ENCODE measurements at regions of chr13 and their contacts with region 1.

Region 1: DNA sequence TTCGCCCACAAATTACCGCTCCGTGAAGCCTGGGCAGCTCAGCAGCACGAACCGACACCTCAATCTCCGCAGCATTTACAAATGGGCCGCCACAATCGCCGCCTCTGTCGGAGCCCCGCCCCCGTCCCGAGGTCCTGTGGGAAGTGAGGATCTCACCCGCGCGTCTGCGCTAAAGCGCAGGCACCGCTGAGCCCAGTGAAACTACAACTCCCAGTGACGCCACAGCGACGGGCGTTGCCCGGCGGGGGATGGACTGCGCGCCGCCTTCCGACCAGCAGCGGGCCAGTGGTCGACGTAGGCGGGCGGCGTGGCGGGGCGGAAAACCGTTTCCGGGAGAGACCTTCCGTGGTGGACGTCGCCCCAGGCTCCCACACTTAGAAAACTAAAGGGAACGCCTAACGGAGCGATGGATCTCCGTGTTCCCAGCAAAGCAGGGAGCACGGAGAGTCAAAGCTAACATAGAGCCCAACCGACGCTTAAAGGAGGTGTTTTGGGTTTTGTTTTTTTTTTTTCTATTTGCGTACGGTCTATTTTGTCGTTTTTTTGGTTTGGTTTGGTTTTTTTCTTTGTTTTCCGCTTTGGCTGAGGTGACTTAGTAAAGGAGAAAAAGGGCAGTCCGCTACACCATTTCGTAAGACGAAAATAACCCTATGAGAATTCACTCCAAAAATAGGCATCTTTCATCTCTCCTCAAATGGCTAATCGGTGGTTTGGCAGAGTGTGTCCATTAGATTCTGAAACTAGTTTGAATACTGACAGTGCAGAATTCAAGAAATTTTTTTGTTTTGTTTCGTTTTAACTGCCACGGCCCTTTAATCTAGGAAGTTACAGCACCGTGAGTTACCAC is 159.0 kb downstream of the RNF17 start:
- DNase-seq: peak; percentile 85 to 96 (median 94)
- ATAC-seq: peak; percentile 99
- H3K4me3 ChIP-seq: peak overlapping the region; percentile 82 to 95
- H3K4me3 Mint-ChIP-seq: peak overlapping the region; percentile 96
- H3K27ac ChIP-seq: peak overlapping the region; percentile 70 to 94
- H3K27ac Mint-ChIP-seq: peak overlapping the region; percentile 92
- H3K4me1 ChIP-seq: peaks cover 9% of the 10 kb centered on the region
- H3K4me1 Mint-ChIP-seq: peaks cover 15% of the 10 kb centered on the region
- H3K27me3 ChIP-seq: no peaks in the 10 kb centered on the region
- H3K27me3 Mint-ChIP-seq: no peaks in the 10 kb centered on the region
- CTCF ChIP-seq: no peak

Region 2: GRCh38 chr13:23888658-23889614 is 1034.0 kb before region 1 on chr13 and contains the start of gene MIPEP:
- CTCF ChIA-PET with region 1: no interaction called
- POLR2A ChIA-PET with region 1: no interaction called
- intact Hi-C with region 1: loop called in 1 of 2 experiments (anchors 5 kb)
- DNase-seq: peak; percentile 73 to 95 (median 87)
- ATAC-seq: peak; percentile 93
- H3K4me3 ChIP-seq: peak within 1 kb of the TSS; percentile 79
- H3K4me3 Mint-ChIP-seq: peak within 1 kb of the TSS; percentile 90
- H3K27ac ChIP-seq: peak within 1 kb of the TSS; percentile 61 to 71
- H3K27ac Mint-ChIP-seq: peak within 1 kb of the TSS; percentile 88
- H3K4me1 ChIP-seq: peaks cover 7% of the 10 kb centered on the region
- H3K4me1 Mint-ChIP-seq: peaks cover 23% of the 10 kb centered on the region
- H3K27me3 ChIP-seq: no peaks in the 10 kb centered on the region
- H3K27me3 Mint-ChIP-seq: peaks cover 3% of the 10 kb centered on the region
- CTCF ChIP-seq: peak; percentile 65
- total RNA-seq, gene MIPEP: 3.0 to 3.8 TPM

Region 3: GRCh38 chr13:24254146-24254841 is 668.7 kb before region 1 on chr13:
- CTCF ChIA-PET with region 1: no interaction called
- POLR2A ChIA-PET with region 1: no interaction called
- intact Hi-C with region 1: loop called in 1 of 2 experiments (anchors 5 kb)
- DNase-seq: peak in 8 of 9 experiments; percentile 44 to 91 (median 69)
- ATAC-seq: peak; percentile 58
- H3K4me3 ChIP-seq: peak overlapping the region; percentile 73 to 94
- H3K4me3 Mint-ChIP-seq: peak overlapping the region; percentile 91
- H3K27ac ChIP-seq: peak overlapping the region; percentile 77 to 84
- H3K27ac Mint-ChIP-seq: peak overlapping the region; percentile 98
- H3K4me1 ChIP-seq: peaks cover 85% of the 10 kb centered on the region
- H3K4me1 Mint-ChIP-seq: peaks cover 94% of the 10 kb centered on the region
- H3K27me3 ChIP-seq: no peaks in the 10 kb centered on the region
- H3K27me3 Mint-ChIP-seq: no peaks in the 10 kb centered on the region
- CTCF ChIP-seq: no peak

Region 4: DNA sequence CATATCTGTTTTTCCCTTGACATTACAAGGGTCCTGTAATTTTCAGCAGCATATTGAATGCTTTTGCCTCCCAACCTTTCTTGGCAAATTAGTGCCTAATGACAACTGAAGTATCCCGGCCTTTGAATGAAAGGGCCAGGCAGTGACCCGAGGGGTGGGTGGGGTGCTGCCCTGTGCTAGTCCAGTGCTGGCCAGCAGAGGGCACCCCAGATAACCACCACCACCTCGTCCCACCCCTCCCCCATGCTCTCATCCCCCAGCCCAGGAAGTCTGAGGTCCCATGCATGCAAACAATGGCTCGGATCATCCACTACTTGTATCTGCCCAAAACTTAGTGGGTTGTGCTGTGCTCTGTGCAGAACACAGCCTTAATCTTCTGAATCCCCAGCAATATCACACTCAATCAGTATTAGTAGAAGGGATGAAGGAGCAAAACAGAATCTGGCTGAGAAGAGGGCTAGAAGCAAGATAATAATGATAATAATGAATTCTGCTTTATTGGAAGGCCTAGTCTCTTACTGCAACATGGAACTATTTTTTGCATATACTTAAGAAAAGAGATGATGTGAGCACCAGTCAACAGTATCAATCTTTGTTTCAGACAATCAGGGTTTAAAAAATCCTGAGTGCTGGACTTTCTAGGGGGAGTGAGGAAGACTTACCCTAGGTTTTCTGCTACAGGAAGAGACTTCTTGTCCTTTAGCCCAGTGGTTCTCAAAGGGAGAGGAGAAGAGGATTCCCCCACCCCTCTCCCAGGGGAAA is 238.9 kb before region 1 on chr13:
- CTCF ChIA-PET with region 1: no interaction called
- POLR2A ChIA-PET with region 1: no interaction called
- intact Hi-C with region 1: no loop called
- DNase-seq: peak in 8 of 9 experiments; percentile 52 to 79 (median 60)
- ATAC-seq: peak; percentile 85
- H3K4me3 ChIP-seq: no peak overlapping the region
- H3K4me3 Mint-ChIP-seq: peak overlapping the region; percentile 51
- H3K27ac ChIP-seq: no peak overlapping the region
- H3K27ac Mint-ChIP-seq: peak overlapping the region; percentile 0
- H3K4me1 ChIP-seq: peaks cover 27% of the 10 kb centered on the region
- H3K4me1 Mint-ChIP-seq: peaks cover 31% of the 10 kb centered on the region
- H3K27me3 ChIP-seq: peaks cover 10 to 17% of the 10 kb centered on the region in 2 experiments
- H3K27me3 Mint-ChIP-seq: peaks cover 30% of the 10 kb centered on the region
- CTCF ChIP-seq: peak; percentile 69

Region 5: GRCh38 chr13:24802074-24802473 is 120.9 kb before region 1 on chr13:
- CTCF ChIA-PET with region 1: no interaction called
- POLR2A ChIA-PET with region 1: no interaction called
- intact Hi-C with region 1: no loop called
- DNase-seq: no peak
- ATAC-seq: no peak
- H3K4me3 ChIP-seq: no peak overlapping the region
- H3K4me3 Mint-ChIP-seq: no peak overlapping the region
- H3K27ac ChIP-seq: no peak overlapping the region
- H3K27ac Mint-ChIP-seq: no peak overlapping the region
- H3K4me1 ChIP-seq: no peaks in the 10 kb centered on the region
- H3K4me1 Mint-ChIP-seq: no peaks in the 10 kb centered on the region
- H3K27me3 ChIP-seq: no peaks in the 10 kb centered on the region
- H3K27me3 Mint-ChIP-seq: peaks cover 7% of the 10 kb centered on the region
- CTCF ChIP-seq: no peak

Region 6: GRCh38 chr13:24943136-24943535 is 20.2 kb after region 1 on chr13:
- CTCF ChIA-PET with region 1: no interaction called
- POLR2A ChIA-PET with region 1: no interaction called
- intact Hi-C with region 1: no loop called
- DNase-seq: no peak
- ATAC-seq: no peak
- H3K4me3 ChIP-seq: no peak overlapping the region
- H3K4me3 Mint-ChIP-seq: no peak overlapping the region
- H3K27ac ChIP-seq: no peak overlapping the region
- H3K27ac Mint-ChIP-seq: no peak overlapping the region
- H3K4me1 ChIP-seq: no peaks in the 10 kb centered on the region
- H3K4me1 Mint-ChIP-seq: no peaks in the 10 kb centered on the region
- H3K27me3 ChIP-seq: no peaks in the 10 kb centered on the region
- H3K27me3 Mint-ChIP-seq: peaks cover 23% of the 10 kb centered on the region
- CTCF ChIP-seq: no peak

Region 7: DNA sequence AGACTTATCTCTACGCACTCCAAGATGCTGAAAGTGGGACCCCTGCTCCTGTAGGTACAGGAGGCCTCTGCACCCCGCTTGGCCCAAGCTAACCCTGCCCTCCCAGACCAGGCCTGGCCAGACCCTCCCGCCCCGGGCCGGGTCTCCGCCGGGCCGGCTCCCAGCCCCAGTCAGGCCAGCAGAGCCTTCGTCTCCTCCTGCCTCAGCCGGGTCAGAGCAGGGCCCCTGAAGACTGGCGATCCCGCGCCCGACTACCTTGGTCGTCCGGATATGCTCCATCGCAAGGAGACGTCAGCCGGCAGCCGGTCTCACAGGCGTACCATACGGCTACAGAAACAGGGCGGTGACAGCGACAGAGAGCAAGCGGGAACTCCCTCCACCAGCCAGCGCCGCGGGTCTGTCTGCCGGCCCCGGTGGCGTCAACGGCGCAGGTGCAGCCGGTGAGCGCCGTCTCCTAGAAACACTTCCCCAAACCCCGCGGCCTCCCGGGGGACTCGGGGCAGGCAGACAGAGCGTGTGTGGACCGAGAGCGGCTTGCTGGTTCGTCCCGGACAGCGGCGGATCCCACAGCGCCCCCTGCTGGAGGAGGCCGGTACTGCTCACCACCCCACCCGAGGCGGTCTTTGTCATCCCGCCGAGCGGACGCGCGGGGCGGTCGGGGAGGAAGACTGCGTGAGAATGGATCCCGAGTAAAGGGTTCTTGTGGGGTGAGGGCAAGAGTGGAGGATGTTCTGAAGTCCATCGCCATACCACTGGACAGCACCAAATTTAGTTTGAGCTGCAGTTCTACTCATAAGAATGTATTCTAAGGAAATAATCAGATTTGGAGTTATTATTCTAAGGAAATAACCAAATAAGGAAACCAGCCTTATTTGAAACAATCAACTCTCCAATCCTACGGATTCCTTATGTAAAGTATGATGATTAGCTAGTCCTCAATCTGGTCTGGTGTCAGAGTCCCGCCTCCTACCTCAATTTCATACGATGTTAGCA is 364.3 kb after region 1 on chr13 and contains the start of gene MTMR6:
- CTCF ChIA-PET with region 1: no interaction called
- POLR2A ChIA-PET with region 1: no interaction called
- intact Hi-C with region 1: loop called in 1 of 2 experiments (anchors 5 kb)
- DNase-seq: peak; percentile 90 to 98 (median 94)
- ATAC-seq: peak; percentile 81
- H3K4me3 ChIP-seq: peak within 1 kb of the TSS; percentile 83 to 95
- H3K4me3 Mint-ChIP-seq: peak within 1 kb of the TSS; percentile 98
- H3K27ac ChIP-seq: peak within 1 kb of the TSS; percentile 94 to 97
- H3K27ac Mint-ChIP-seq: peak within 1 kb of the TSS; percentile 99
- H3K4me1 ChIP-seq: peaks cover 23% of the 10 kb centered on the region
- H3K4me1 Mint-ChIP-seq: peaks cover 41% of the 10 kb centered on the region
- H3K27me3 ChIP-seq: peaks cover 0 to 2% of the 10 kb centered on the region in 2 experiments
- H3K27me3 Mint-ChIP-seq: peaks cover 10% of the 10 kb centered on the region
- CTCF ChIP-seq: peak; percentile 99
- total RNA-seq, gene MTMR6: 41.9 to 44.4 TPM

Region 8: DNA sequence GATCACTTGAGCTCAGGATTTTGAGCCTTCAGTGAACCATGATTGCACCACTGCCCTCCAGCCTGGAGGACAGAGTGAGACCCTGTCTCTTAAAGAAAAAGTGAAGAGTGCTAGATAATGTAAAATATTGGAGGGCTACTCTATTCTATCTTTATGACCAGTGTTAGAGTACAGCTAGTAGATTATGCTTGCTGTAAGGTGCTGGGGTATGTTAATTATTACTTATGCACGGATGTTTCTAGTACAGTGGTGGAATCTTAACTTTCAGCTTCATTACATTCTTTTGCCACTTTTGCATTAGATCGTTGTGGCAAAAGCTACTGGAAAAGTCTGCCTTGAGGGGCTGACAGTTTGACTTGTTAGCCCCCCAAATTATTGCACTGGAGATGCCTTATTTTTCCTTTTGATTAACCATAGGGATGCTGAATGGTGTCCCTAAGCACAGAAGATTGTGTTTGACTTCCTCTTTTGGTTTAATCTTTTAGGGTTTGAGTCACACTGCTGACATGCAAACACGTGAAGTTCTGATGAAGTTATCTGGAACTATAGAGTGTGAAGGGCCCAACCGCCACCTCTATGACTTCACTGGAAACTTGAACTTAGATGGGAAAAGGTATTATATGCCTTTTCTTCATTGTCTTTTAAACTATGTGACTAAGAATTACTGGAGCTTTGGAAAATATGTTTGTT is 618.6 kb after region 1 on chr13:
- CTCF ChIA-PET with region 1: no interaction called
- POLR2A ChIA-PET with region 1: no interaction called
- intact Hi-C with region 1: no loop called
- DNase-seq: no peak
- ATAC-seq: no peak
- H3K4me3 ChIP-seq: no peak overlapping the region
- H3K4me3 Mint-ChIP-seq: no peak overlapping the region
- H3K27ac ChIP-seq: no peak overlapping the region
- H3K27ac Mint-ChIP-seq: no peak overlapping the region
- H3K4me1 ChIP-seq: no peaks in the 10 kb centered on the region
- H3K4me1 Mint-ChIP-seq: no peaks in the 10 kb centered on the region
- H3K27me3 ChIP-seq: no peaks in the 10 kb centered on the region
- H3K27me3 Mint-ChIP-seq: peaks cover 10% of the 10 kb centered on the region
- CTCF ChIP-seq: no peak

Region 9: GRCh38 chr13:26253787-26254582 is 1331.0 kb after region 1 on chr13 and contains the start of gene CDK8:
- CTCF ChIA-PET with region 1: no interaction called
- POLR2A ChIA-PET with region 1: no interaction called
- intact Hi-C with region 1: loop called in 1 of 2 experiments (anchors 5 kb)
- DNase-seq: peak; percentile 78 to 95 (median 90)
- ATAC-seq: peak; percentile 87
- H3K4me3 ChIP-seq: peak within 1 kb of the TSS; percentile 79 to 100
- H3K4me3 Mint-ChIP-seq: peak within 1 kb of the TSS; percentile 90
- H3K27ac ChIP-seq: peak within 1 kb of the TSS; percentile 59 to 92
- H3K27ac Mint-ChIP-seq: peak within 1 kb of the TSS; percentile 88
- H3K4me1 ChIP-seq: peaks cover 27% of the 10 kb centered on the region
- H3K4me1 Mint-ChIP-seq: peaks cover 37% of the 10 kb centered on the region
- H3K27me3 ChIP-seq: no peaks in the 10 kb centered on the region
- H3K27me3 Mint-ChIP-seq: peaks cover 2% of the 10 kb centered on the region
- CTCF ChIP-seq: no peak
- total RNA-seq, gene CDK8: 4.9 to 5.3 TPM

Measured in CD8-positive, alpha-beta T cell (primary cell).